RWPE1 (cell line): ENCODE measurements at regions of chr15 and their contacts with region 1.

Region 1: GRCh38 chr15:58077427-58077826 is 11.9 kb upstream of the ALDH1A2 start:
- DNase-seq: no peak
- H3K27ac ChIP-seq: no peak overlapping the region
- CTCF ChIP-seq: peak; percentile 15; the same call in 1 of the 2 replicates

Region 2: DNA sequence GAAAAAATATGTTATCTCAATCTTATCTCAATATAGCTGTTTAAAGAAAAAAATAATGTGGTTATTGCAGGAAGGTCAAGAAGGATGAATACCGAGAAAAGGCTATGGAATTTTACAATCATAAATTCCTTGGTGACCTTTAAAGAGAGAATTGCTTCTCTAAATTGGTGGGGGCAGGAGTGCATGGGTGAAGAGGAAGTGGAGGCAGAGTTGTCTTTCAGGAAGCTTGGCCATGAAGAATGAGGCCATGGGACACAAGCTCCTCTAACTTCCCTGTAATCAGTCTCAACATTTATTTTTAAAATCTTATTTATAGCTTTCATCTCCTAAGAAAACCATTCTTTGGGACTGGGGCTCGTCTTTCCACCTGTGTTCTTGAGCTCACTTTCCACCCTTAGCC is 10.4 kb after region 1 on chr15:
- CTCF ChIA-PET with region 1: no interaction called
- POLR2A ChIA-PET with region 1: no interaction called
- DNase-seq: no peak
- H3K27ac ChIP-seq: no peak overlapping the region
- CTCF ChIP-seq: no peak

Region 3: GRCh38 chr15:58110999-58111717 is 33.7 kb after region 1 on chr15:
- CTCF ChIA-PET with region 1: no interaction called
- POLR2A ChIA-PET with region 1: no interaction called
- DNase-seq: no peak
- H3K27ac ChIP-seq: no peak overlapping the region
- CTCF ChIP-seq: no peak

Region 4: DNA sequence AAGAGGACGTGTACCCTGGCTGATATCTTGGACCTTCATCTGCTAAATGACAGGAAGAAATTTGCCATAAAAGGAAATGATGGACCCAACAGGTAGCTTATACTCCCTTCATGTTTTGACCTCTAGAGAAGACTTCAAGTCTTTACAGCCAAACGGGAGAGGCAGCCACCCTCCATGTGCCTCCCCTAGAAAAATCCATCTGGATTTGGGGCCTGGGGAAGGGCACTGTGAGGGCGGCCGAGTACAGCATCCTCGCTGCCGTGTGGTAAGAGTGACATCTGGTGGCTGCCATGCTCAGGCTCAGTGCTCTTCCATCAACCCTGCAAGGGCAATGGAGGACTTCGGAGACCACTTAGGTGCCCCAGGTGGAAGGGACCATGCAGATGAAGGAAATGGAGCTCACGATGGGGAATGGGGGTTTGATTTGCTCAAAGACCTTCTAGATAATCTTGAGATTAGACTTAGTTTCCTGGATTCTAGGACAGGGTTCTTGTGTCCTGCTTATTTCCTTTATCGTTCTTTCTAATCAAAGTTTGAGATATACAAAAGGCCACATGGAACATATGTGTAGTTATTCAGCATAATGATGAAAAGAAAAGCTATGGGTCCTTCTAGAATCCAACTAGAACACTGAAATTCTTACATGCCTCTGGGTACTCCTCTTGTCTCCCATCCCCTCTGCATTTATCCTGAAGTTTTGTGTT is 105.2 kb after region 1 on chr15:
- CTCF ChIA-PET with region 1: interaction called, 13 read pairs
- POLR2A ChIA-PET with region 1: no interaction called
- DNase-seq: peak; percentile 70
- H3K27ac ChIP-seq: no peak overlapping the region
- CTCF ChIP-seq: peak; percentile 84

Region 5: DNA sequence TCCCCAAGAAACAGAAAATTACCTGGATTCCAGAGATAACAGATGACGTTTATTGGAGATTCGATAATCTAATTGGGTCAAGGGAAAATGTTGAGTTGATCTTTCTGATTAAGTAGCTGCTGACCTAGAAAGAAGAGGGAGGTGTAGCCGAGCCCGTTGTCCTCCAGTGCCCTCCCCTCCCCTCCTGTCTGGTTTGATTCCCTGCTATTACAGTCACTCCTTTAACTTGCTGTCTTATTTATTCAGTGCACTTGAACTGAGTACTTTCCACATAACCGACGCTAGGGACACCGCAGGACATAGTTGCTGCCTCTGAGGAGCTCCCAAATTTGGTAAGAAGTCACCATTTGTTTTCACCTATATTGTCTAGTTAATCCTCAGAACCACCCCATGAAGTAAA is 164.4 kb after region 1 on chr15:
- CTCF ChIA-PET with region 1: no interaction called
- POLR2A ChIA-PET with region 1: no interaction called
- DNase-seq: no peak
- H3K27ac ChIP-seq: no peak overlapping the region
- CTCF ChIP-seq: no peak

Region 6: GRCh38 chr15:58298879-58299850 is 221.7 kb after region 1 on chr15:
- CTCF ChIA-PET with region 1: no interaction called
- POLR2A ChIA-PET with region 1: no interaction called
- DNase-seq: no peak
- H3K27ac ChIP-seq: no peak overlapping the region
- CTCF ChIP-seq: no peak